ENCODE measurements at regions of chr1 and their contacts with region 1.

Region 1: GRCh38 chr1:155504207-155504606 is 58.4 kb downstream of the ASH1L start:
- DNase-seq: peak in 3 of 35 experiments; percentile 4 to 51 (median 7)
- ATAC-seq: peak in 1 of 4 experiments; percentile 45
- H3K4me3 ChIP-seq: no peak overlapping the region
- H3K4me3 Mint-ChIP-seq: no peak overlapping the region
- H3K27ac ChIP-seq: no peak overlapping the region
- H3K27ac Mint-ChIP-seq: peak overlapping the region in 1 of 2 donors; percentile 1
- H3K4me1 ChIP-seq: peaks cover 11% of the 10 kb centered on the region in 2 experiments
- H3K4me1 Mint-ChIP-seq: peaks cover 49 to 57% (median 52%) of the 10 kb centered on the region in 3 donors
- H3K27me3 ChIP-seq: no peaks in the 10 kb centered on the region
- H3K27me3 Mint-ChIP-seq: no peaks in the 10 kb centered on the region

Region 2: DNA sequence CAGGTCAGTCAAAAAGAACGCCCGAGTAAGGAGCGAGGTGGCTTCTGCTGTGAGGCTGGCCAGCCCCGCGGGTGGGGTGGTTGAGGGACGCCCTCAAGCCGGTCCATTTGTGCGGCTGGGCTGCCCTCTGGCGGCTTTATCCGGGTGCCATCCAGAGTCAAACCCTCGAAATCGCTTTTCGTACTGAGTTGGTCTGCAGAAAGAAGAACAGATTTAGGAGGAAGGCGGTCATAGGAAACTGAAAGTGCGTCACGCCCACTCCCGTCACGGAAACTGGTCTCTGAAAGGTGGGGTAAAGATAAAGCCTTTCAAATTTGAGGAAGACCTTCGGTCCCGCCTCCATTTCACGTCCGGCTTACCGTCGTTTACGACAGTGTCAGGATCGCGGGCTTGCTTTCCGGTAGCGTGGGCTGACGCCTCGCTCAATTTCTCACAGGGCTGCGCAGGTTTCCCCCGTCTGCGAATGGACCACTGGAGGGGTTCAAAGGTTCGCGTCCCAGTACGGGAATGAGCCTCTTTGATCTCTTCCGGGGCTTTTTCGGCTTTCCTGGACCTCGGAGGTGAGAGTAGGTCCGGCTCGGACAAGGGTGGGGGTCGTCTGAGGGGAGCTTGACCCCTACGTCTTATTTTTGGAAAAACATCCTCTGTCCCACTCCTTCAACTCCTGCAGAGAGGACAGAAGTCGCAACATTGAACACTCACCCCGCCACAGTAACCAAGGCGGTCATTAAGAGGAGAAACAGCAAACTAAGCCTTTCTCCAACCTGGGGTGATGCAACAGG is 1231.8 kb before region 1 on chr1 and contains the start of gene HAX1:
- CTCF ChIA-PET with region 1: no interaction called
- POLR2A ChIA-PET with region 1: interaction called in 1 of 2 experiments, 12 read pairs
- DNase-seq: peak; percentile 86 to 99 (median 96)
- ATAC-seq: peak; percentile 92 to 93 (median 92)
- H3K4me3 ChIP-seq: peak within 1 kb of the TSS; percentile 98 to 99
- H3K4me3 Mint-ChIP-seq: peak within 1 kb of the TSS; percentile 97 to 100 (median 97)
- H3K27ac ChIP-seq: peak within 1 kb of the TSS; percentile 96
- H3K27ac Mint-ChIP-seq: peak within 1 kb of the TSS; percentile 98
- H3K4me1 ChIP-seq: peaks cover 17 to 28% of the 10 kb centered on the region in 2 experiments
- H3K4me1 Mint-ChIP-seq: peaks cover 34 to 41% (median 39%) of the 10 kb centered on the region in 3 donors
- H3K27me3 ChIP-seq: no peaks in the 10 kb centered on the region
- H3K27me3 Mint-ChIP-seq: no peaks in the 10 kb centered on the region
- total RNA-seq, gene HAX1: 69.4 to 97.7 (median 92.5) TPM